Activated CD4-positive, alpha-beta T cell treated with anti-CD3 and anti-CD28 coated beads for 36 hours (primary cell): ENCODE measurements at regions of chr15 and their contacts with region 1.

Region 1: DNA sequence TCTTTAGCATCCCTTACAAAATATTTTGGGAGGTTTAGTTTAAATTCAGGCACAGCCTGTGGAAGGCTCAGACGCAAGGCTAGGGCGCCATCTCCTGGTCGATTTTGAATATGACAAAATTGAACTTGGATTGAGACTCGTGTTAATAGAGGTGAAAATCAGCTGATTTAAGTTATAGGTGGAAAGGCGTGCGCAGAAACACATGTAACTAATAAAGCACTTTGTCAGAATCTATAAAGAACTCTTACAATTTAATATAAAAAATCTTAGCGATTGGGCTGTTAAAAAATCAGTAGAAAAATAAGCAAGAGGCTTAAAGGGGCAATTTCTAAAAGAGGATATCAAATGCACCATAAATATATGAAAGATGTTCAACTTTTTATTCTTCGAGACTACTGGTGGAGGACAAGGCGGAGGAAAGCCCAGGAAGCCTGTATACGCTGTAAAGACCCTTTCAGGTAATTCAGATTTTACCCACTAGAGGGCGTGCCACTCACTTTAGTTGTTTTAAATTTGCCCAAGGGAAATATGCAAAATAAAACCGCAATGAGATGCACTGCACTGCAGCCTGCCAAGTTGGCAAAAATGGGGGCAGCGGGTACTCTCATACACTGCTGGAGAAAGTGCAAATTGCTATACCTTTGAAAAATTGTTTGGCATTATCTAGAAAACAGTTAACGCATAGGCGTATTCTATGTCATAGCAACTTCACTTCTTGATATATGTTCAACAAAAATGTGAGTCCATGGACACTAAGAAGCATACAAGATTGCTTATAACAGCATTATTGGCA is 64.7 kb downstream of the SLC30A4 start:
- DNase-seq: peak; percentile 82
- ATAC-seq: peak; percentile 59
- H3K4me3 Mint-ChIP-seq: peak overlapping the region; percentile 73
- H3K27ac Mint-ChIP-seq: peak overlapping the region; percentile 80
- H3K4me1 Mint-ChIP-seq: peaks cover 44% of the 10 kb centered on the region
- H3K27me3 Mint-ChIP-seq: no peaks in the 10 kb centered on the region

Region 2: GRCh38 chr15:45126535-45127158 is 331.2 kb before region 1 on chr15:
- CTCF ChIA-PET with region 1: no interaction called
- POLR2A ChIA-PET with region 1: no interaction called
- intact Hi-C with region 1: loop called in 1 of 2 experiments (anchors 1 kb)
- DNase-seq: peak; percentile 51
- ATAC-seq: peak; percentile 50
- H3K4me3 Mint-ChIP-seq: no peak overlapping the region
- H3K27ac Mint-ChIP-seq: no peak overlapping the region
- H3K4me1 Mint-ChIP-seq: no peaks in the 10 kb centered on the region
- H3K27me3 Mint-ChIP-seq: peaks cover 43% of the 10 kb centered on the region

Region 3: GRCh38 chr15:45279024-45279698 is 178.7 kb before region 1 on chr15:
- CTCF ChIA-PET with region 1: no interaction called
- POLR2A ChIA-PET with region 1: no interaction called
- intact Hi-C with region 1: loop called in 1 of 2 experiments (anchors 1 kb)
- DNase-seq: peak; percentile 97
- ATAC-seq: peak; percentile 100
- H3K4me3 Mint-ChIP-seq: peak overlapping the region; percentile 83
- H3K27ac Mint-ChIP-seq: peak overlapping the region; percentile 83
- H3K4me1 Mint-ChIP-seq: peaks cover 18% of the 10 kb centered on the region
- H3K27me3 Mint-ChIP-seq: peaks cover 1% of the 10 kb centered on the region

Region 4: DNA sequence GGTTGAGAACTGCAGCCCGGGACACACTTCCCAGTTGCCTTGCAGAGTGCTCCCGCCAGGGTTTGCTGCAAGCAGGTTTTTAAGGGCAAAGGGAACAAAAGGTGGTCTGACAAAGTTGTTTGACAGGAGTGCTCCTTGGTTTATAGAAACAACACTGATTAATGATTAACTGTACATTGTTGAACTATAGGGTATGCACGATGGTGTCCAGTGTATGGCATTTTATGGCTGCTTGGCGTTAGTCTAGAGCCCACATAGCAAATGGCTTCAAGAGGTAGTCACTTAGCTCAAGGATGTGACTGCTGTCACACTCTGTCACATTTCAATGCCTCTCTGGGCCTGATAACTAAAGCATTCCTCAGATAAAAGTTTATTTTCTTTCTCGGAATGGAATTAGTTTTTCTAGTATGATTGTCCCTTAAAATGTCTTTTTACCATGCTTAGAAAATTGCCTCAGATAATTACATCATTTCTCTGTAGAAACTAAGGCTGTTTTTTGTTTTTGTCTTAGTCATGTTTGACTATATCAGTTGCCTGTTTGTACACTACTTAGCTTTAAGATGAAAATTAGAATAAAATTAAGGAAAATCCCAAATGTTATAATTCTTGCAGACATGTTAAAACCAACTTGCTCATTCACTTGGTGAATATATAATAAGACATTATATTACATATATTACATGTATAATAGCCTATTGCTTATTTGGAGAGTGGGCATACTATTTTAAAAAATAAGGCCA is 18.1 kb before region 1 on chr15:
- CTCF ChIA-PET with region 1: interaction called, 12 read pairs
- POLR2A ChIA-PET with region 1: no interaction called
- intact Hi-C with region 1: no loop called
- DNase-seq: no peak
- ATAC-seq: no peak
- H3K4me3 Mint-ChIP-seq: no peak overlapping the region
- H3K27ac Mint-ChIP-seq: no peak overlapping the region
- H3K4me1 Mint-ChIP-seq: no peaks in the 10 kb centered on the region
- H3K27me3 Mint-ChIP-seq: peaks cover 2% of the 10 kb centered on the region

Region 5: DNA sequence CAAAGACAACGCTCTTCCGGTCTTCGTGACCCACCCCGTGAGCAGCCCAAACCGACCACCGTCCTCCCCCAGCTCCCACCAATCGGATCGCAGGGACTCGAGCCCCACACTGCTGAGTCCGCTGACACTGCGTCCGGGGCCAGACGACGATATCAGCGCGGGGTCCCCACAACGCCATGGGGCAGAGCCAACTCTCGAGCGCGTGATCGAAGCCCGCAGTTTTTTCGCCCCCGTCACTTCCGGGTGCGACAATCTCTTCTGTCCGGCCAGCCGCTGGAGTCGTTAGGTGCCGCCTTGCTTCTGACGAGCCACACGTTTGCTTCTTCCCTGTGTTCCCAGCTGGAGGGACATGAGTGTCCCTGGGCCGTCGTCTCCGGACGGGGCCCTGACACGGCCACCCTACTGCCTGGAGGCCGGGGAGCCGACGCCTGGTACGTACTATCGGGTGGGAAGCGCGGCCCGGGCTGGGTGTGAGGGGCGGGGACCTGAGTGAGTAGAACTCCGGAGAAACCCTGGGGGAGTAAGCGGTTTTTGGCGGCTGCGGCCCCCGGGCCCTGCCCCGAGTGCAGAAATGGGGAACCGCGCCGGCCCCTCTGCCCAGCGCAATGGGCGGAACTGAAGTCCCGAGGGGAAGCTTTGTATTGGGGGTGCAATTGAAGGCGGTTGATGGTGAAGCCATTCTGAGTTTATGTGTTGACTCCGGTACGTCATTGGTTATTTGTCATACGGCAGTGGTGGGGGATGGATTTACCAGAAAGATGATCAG is 129.4 kb after region 1 on chr15 and contains the start of gene BLOC1S6:
- CTCF ChIA-PET with region 1: interaction called, 24 read pairs
- POLR2A ChIA-PET with region 1: no interaction called
- intact Hi-C with region 1: loop called (anchors 1 to 2 kb)
- DNase-seq: peak; percentile 91
- ATAC-seq: peak; percentile 81
- H3K4me3 Mint-ChIP-seq: peak within 1 kb of the TSS; percentile 94
- H3K27ac Mint-ChIP-seq: peak within 1 kb of the TSS; percentile 100
- H3K4me1 Mint-ChIP-seq: peaks cover 48% of the 10 kb centered on the region
- H3K27me3 Mint-ChIP-seq: no peaks in the 10 kb centered on the region
- total RNA-seq, gene BLOC1S6: 36.1 to 52.5 TPM

Region 6: DNA sequence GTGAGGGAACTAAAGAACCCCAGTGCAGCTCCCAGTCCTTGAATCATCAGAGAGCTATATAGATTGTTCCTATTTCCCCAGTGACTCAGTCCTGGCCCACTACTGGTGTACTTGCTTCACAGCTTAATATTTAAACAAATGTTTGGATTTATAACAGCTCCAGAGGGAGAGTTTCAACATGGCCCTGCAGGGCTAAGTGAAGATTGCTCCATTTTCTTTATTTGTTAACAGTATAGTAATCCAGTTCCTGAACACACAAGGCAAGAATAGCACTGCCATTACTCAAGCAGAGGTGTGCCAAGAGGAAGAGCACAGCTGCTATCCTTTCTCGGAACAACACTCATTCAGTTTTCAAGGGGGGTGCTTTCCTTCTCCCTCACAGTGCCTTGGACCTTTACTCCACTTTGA is 183.5 kb after region 1 on chr15:
- CTCF ChIA-PET with region 1: interaction called, 10 read pairs
- POLR2A ChIA-PET with region 1: no interaction called
- intact Hi-C with region 1: no loop called
- DNase-seq: no peak
- ATAC-seq: peak; percentile 21
- H3K4me3 Mint-ChIP-seq: no peak overlapping the region
- H3K27ac Mint-ChIP-seq: peak overlapping the region; percentile 55
- H3K4me1 Mint-ChIP-seq: peaks cover 91% of the 10 kb centered on the region
- H3K27me3 Mint-ChIP-seq: no peaks in the 10 kb centered on the region

Region 7: DNA sequence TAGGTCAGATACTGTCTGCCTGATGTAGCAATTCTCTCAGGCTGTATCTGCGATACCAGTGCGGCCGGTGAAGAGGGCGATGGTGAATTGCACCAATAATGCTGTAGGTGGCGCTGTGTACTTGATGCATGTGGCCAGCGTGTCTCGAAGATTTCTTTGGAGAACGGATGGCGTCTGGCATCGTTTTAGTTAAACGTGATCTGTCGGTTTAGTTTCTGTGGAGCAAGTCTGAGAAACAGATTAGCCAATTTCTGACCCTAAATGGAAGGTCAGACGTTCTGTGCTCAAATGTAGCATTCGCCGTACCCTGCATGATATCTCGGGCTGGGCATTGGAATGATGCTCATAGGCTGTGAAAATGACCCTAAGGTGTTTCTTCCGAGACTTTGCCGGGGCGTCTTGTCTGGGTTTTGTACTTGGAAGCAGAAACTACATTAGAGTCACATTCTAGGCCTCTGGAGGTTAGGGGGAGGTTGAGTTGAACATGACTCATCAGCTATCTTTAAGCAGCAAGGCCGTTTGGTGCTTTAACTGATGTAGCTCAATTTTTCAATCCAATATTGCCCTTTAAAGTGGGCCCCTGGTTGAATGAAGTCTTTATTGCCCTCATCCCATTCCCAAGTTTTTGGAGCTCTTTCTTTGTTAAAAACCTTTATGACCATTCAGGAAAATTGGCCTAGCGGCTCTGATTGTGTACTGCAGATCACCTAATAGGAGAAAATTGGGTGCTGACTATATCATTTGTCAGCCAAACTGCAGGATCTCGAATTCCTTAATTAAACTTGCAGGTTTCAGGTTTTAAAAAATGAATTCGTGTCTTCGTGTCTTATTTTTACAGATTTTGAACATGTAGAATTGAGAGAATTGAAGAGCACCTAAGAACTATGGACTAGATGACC is 257.0 kb after region 1 on chr15:
- CTCF ChIA-PET with region 1: no interaction called
- POLR2A ChIA-PET with region 1: no interaction called
- intact Hi-C with region 1: no loop called
- DNase-seq: peak; percentile 75
- ATAC-seq: peak; percentile 64
- H3K4me3 Mint-ChIP-seq: no peak overlapping the region
- H3K27ac Mint-ChIP-seq: no peak overlapping the region
- H3K4me1 Mint-ChIP-seq: no peaks in the 10 kb centered on the region
- H3K27me3 Mint-ChIP-seq: peaks cover 21% of the 10 kb centered on the region

Region 8: GRCh38 chr15:45785897-45786296 is 328.1 kb after region 1 on chr15:
- CTCF ChIA-PET with region 1: no interaction called
- POLR2A ChIA-PET with region 1: no interaction called
- intact Hi-C with region 1: no loop called
- DNase-seq: no peak
- ATAC-seq: no peak
- H3K4me3 Mint-ChIP-seq: no peak overlapping the region
- H3K27ac Mint-ChIP-seq: no peak overlapping the region
- H3K4me1 Mint-ChIP-seq: no peaks in the 10 kb centered on the region
- H3K27me3 Mint-ChIP-seq: peaks cover 3% of the 10 kb centered on the region